Caco-2 (cell line): ENCODE measurements at regions of chr12 and their contacts with region 1.

Region 1: GRCh38 chr12:81627336-81628189 is 131.6 kb downstream of the PPFIA2 start:
- DNase-seq: peak in 1 of 2 experiments; percentile 35
- H3K4me3 ChIP-seq: no peak overlapping the region
- H3K4me3 Mint-ChIP-seq: no peak overlapping the region
- H3K27ac Mint-ChIP-seq: no peak overlapping the region
- H3K4me1 ChIP-seq: no peaks in the 10 kb centered on the region
- H3K4me1 Mint-ChIP-seq: no peaks in the 10 kb centered on the region
- H3K27me3 ChIP-seq: no peaks in the 10 kb centered on the region
- H3K27me3 Mint-ChIP-seq: no peaks in the 10 kb centered on the region
- CTCF ChIP-seq: peak; percentile 50 to 51

Region 2: DNA sequence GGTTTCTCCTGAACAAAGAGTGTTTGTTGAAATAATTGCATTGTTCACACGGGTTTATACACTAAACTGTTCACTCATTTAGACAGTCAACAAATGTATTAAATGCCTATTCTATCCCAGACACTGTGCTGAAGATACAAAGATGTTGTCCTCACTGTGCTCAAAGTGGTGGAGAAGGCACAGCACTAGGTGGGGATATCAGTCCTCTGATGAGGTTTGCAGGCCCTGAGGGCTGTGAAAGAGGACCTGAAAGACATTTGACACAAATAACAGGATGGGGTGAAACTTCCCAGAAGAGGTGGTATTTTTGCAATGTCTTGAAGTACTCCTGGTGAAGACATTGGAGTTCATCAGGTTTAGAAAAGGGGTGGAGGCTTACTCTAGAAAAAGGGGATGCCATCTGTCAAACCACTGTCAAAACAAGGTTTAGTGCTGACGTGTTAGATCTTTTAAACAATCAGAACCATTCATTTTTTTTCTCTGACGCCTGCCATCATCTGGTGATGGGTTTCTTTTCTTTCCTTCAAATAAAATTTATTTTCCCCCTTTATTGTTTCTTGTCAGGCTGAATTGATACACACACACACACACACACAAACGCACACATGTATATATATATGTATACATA is 480.2 kb before region 1 on chr12:
- CTCF ChIA-PET with region 1: no interaction called
- POLR2A ChIA-PET with region 1: no interaction called
- intact Hi-C with region 1: loop called (anchors 2 kb)
- DNase-seq: peak; percentile 49 to 50
- H3K4me3 ChIP-seq: no peak overlapping the region
- H3K4me3 Mint-ChIP-seq: peak overlapping the region; percentile 30
- H3K27ac Mint-ChIP-seq: peak overlapping the region; percentile 65
- H3K4me1 ChIP-seq: peaks cover 45% of the 10 kb centered on the region
- H3K4me1 Mint-ChIP-seq: peaks cover 23% of the 10 kb centered on the region
- H3K27me3 ChIP-seq: no peaks in the 10 kb centered on the region
- H3K27me3 Mint-ChIP-seq: no peaks in the 10 kb centered on the region
- CTCF ChIP-seq: no peak

Region 3: GRCh38 chr12:81329085-81329484 is 298.5 kb before region 1 on chr12:
- CTCF ChIA-PET with region 1: no interaction called
- POLR2A ChIA-PET with region 1: no interaction called
- intact Hi-C with region 1: loop called (anchors 1 kb)
- DNase-seq: peak in 1 of 2 experiments; percentile 40
- H3K4me3 ChIP-seq: no peak overlapping the region
- H3K4me3 Mint-ChIP-seq: no peak overlapping the region
- H3K27ac Mint-ChIP-seq: no peak overlapping the region
- H3K4me1 ChIP-seq: no peaks in the 10 kb centered on the region
- H3K4me1 Mint-ChIP-seq: no peaks in the 10 kb centered on the region
- H3K27me3 ChIP-seq: no peaks in the 10 kb centered on the region
- H3K27me3 Mint-ChIP-seq: peaks cover 3% of the 10 kb centered on the region
- CTCF ChIP-seq: peak; percentile 45 to 59

Region 4: DNA sequence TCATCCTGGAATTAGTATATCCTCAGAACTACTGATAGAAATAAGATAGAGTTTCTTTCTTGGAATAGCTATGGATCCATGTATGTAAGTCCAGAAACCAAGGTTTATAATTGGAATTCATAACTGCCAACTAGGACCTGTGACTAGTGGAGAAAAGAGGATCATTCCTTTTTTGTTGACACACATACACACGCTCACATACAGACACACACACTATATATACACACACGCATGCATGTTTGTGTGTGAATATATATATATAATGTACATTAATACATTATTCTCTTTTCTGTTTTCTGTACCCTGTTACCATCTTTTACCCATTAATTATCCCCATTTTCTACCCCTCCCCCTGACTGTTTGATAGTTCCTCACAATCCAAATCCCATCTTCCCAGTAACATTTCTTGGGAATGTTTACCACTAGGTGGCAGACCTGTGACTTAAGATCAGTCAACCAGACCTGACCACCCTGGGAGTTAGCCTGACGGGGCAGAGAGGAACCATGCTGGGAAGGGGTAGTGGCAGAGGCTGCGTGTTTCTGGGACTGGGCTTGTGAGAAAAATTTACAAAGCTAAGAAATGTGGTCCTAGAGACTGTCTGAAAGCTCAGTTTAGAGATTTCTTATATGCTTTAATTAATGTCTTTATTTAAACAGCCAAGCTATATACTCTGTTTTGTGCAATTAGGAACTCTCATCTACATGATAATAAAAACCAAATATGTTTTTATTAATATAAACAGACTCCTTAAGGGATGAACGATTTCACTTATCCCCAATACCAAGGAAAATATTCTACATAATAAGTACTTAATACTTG is 176.4 kb before region 1 on chr12:
- CTCF ChIA-PET with region 1: interaction called, 4 read pairs
- POLR2A ChIA-PET with region 1: no interaction called
- intact Hi-C with region 1: loop called (anchors 1 kb)
- DNase-seq: peak; percentile 46 to 67
- H3K4me3 ChIP-seq: no peak overlapping the region
- H3K4me3 Mint-ChIP-seq: no peak overlapping the region
- H3K27ac Mint-ChIP-seq: no peak overlapping the region
- H3K4me1 ChIP-seq: no peaks in the 10 kb centered on the region
- H3K4me1 Mint-ChIP-seq: no peaks in the 10 kb centered on the region
- H3K27me3 ChIP-seq: no peaks in the 10 kb centered on the region
- H3K27me3 Mint-ChIP-seq: peaks cover 3% of the 10 kb centered on the region
- CTCF ChIP-seq: peak; percentile 43 to 71

Region 5: DNA sequence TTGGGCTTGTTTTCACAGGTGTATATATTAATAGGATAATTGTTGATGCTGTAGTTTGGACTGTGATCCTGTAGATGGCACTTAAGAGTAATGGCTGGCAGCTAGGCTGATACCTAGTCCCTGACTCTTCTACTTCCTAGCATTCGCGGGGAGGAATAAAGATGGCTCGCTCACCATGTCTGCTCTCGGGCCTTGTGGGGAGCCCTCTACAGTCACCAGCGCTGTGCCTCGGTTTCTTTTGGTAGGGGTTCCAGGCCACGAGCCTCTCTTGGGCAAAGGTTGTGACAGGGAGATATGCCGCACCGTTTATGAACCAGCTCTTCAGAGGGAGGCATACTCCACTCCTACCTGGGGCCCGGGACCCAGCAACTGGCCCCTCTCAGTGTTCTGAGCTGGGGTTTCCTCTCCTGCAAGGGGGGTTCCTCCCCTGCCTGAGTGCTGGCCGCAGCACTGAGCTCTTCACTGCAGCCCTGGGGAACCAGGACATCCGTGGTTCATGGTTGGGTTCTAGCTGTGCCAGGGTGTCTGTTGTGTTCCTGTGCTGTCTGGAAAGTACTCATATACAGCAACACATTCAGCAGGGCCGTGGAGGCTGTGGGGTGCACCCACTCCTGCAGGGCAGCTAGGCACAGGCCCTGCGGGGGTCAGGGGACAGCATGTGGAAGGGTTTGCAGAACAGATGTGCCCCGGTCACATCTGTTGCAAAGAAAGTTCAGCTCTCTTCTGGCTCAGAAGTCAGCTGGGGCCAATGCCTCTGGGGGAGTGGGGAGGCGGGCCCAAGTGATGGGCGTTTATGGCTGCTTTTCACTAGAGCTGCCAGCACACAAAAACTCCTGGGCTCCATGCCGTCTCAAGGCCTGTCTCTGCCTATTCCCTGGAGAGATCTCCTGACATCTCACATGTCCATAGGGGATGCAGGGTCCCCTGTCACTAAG is 16.3 kb before region 1 on chr12:
- CTCF ChIA-PET with region 1: interaction called, 8 read pairs
- POLR2A ChIA-PET with region 1: no interaction called
- intact Hi-C with region 1: loop called (anchors 1 kb)
- DNase-seq: peak in 1 of 2 experiments; percentile 24
- H3K4me3 ChIP-seq: no peak overlapping the region
- H3K4me3 Mint-ChIP-seq: no peak overlapping the region
- H3K27ac Mint-ChIP-seq: no peak overlapping the region
- H3K4me1 ChIP-seq: no peaks in the 10 kb centered on the region
- H3K4me1 Mint-ChIP-seq: no peaks in the 10 kb centered on the region
- H3K27me3 ChIP-seq: no peaks in the 10 kb centered on the region
- H3K27me3 Mint-ChIP-seq: peaks cover 3% of the 10 kb centered on the region
- CTCF ChIP-seq: peak; percentile 48 to 49